Activated CD4-positive, alpha-beta memory T cell treated with anti-CD3 and anti-CD28 coated beads for 36 hours (primary cell): ENCODE measurements at regions of chr5 and their contacts with region 1.

Region 1: GRCh38 chr5:56328753-56329560 is 95.8 kb upstream of the ANKRD55 start:
- DNase-seq: peak; percentile 72
- H3K4me3 Mint-ChIP-seq: peak overlapping the region; percentile 6
- H3K27ac Mint-ChIP-seq: peak overlapping the region; percentile 91
- H3K4me1 Mint-ChIP-seq: peaks cover 70% of the 10 kb centered on the region
- H3K27me3 Mint-ChIP-seq: no peaks in the 10 kb centered on the region

Region 2: DNA sequence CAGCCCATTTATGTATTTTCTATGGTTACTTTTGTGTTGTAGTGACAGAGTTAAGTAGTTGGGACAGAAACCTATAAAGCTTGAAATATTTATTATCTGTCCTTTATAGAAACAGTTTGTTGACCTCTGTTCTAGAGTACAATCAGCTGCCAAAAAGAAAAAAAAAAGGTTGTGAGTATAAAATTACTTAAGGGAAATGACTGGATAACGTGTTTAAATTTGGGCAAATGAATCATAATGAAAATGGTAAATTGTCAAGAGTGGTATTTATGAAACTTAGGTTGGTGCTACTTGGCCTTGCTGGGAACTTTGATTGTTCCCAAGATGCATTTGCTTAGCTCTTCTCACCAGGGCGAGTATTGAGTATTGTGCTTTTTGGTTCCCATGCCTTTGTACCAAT is 264.0 kb before region 1 on chr5:
- CTCF ChIA-PET with region 1: no interaction called
- POLR2A ChIA-PET with region 1: no interaction called
- intact Hi-C with region 1: loop called (anchors 5 kb)
- DNase-seq: no peak
- H3K4me3 Mint-ChIP-seq: no peak overlapping the region
- H3K27ac Mint-ChIP-seq: no peak overlapping the region
- H3K4me1 Mint-ChIP-seq: peaks cover 44% of the 10 kb centered on the region
- H3K27me3 Mint-ChIP-seq: no peaks in the 10 kb centered on the region

Region 3: GRCh38 chr5:56270568-56271392 is 58.2 kb before region 1 on chr5:
- CTCF ChIA-PET with region 1: interaction called, 16 read pairs
- POLR2A ChIA-PET with region 1: no interaction called
- intact Hi-C with region 1: loop called (anchors 2 kb)
- DNase-seq: peak; percentile 89
- H3K4me3 Mint-ChIP-seq: peak overlapping the region; percentile 31
- H3K27ac Mint-ChIP-seq: peak overlapping the region; percentile 82
- H3K4me1 Mint-ChIP-seq: peaks cover 20% of the 10 kb centered on the region
- H3K27me3 Mint-ChIP-seq: no peaks in the 10 kb centered on the region

Region 4: GRCh38 chr5:56610093-56610698 is 281.2 kb after region 1 on chr5:
- CTCF ChIA-PET with region 1: no interaction called
- POLR2A ChIA-PET with region 1: no interaction called
- intact Hi-C with region 1: loop called (anchors 1 kb)
- DNase-seq: peak; percentile 73
- H3K4me3 Mint-ChIP-seq: peak overlapping the region; percentile 8
- H3K27ac Mint-ChIP-seq: peak overlapping the region; percentile 85
- H3K4me1 Mint-ChIP-seq: peaks cover 69% of the 10 kb centered on the region
- H3K27me3 Mint-ChIP-seq: no peaks in the 10 kb centered on the region

Region 5: DNA sequence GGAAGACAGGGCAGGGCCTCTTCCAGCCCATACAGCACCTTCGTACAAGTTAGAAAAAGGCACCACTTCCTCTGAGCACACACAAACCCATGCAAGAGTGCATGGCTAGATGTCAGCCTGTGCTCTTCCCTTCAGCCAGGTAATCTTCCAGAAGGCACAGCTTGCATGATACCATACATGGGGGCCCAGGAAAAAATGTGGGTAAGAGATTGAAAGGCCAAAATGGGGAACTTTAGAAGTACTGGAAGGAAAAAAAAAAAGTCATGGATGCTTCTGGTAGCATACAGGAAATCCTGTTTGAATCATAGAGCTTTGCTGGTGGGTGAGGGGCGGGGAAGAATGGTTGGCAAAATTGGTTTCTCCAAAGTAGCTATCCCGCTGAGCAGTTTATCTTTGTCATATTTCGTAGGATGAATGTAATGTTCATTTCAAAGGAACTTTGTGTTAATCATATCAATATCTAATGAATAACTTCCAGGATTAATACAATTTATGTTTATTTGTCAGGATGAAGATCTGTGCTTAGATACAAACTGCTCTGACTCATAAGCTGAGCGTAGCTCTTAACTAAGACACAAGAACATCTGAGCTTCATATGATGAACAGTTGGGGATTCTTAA is 408.2 kb after region 1 on chr5:
- CTCF ChIA-PET with region 1: no interaction called
- POLR2A ChIA-PET with region 1: no interaction called
- intact Hi-C with region 1: loop called (anchors 2 kb)
- DNase-seq: peak; percentile 28
- H3K4me3 Mint-ChIP-seq: no peak overlapping the region
- H3K27ac Mint-ChIP-seq: peak overlapping the region; percentile 66
- H3K4me1 Mint-ChIP-seq: peaks cover 33% of the 10 kb centered on the region
- H3K27me3 Mint-ChIP-seq: no peaks in the 10 kb centered on the region

Region 6: DNA sequence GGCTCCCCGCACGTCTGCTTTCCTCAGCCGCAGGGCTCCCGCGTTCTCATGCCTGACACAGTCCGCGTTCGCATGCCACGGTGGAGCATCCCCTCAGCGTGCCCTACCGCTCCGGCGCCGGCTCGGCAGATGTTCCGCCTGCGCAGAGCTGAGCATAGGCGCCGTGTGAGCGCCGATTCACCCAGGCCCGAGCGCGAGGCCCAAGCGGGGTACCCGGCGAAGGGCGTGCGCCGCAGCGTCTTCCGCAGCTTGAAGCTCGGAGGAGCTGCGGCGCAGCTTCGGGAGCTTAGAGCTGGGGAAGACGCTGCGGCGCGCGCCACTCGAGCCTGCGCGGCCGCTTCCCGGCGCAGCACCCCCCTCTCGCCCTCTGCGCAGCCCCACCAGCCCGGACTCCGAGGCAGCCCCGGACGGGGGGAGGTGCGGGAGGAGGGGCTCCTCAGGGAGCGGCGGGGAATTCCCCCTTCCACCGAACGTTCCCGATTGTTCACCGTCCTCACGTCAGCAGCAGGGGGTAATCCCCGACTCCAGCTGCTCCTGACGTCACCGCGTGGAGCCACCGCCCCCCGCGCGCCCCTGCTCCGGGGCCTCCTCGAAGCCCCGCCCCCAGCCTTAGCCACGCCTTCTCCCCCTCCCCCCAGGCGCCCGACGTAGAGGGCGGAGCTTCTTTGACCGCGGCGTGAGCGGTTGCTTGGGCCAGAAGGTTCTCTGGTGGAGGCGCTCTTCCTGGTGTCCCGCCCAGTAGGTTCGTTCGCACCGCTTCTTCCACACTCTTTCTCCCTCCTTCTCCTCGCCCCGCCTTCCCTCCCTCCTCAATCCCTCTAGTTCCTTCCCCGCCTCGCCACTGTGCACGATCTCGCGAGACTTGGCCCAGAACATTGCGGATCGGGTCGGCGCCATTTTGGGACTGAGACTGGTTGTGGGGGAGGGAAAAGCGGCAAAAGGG is 844.5 kb after region 1 on chr5 and contains the start of gene GPBP1:
- CTCF ChIA-PET with region 1: no interaction called
- POLR2A ChIA-PET with region 1: interaction called, 4 read pairs
- intact Hi-C with region 1: loop called (anchors 5 kb)
- DNase-seq: peak; percentile 98
- H3K4me3 Mint-ChIP-seq: peak within 1 kb of the TSS; percentile 86
- H3K27ac Mint-ChIP-seq: peak within 1 kb of the TSS; percentile 98
- H3K4me1 Mint-ChIP-seq: peaks cover 20% of the 10 kb centered on the region
- H3K27me3 Mint-ChIP-seq: no peaks in the 10 kb centered on the region
- total RNA-seq, gene GPBP1: 94.1 to 98.5 TPM